CD4-positive, alpha-beta T cell (primary cell): ENCODE measurements at regions of chr1 and their contacts with region 1.

Region 1: DNA sequence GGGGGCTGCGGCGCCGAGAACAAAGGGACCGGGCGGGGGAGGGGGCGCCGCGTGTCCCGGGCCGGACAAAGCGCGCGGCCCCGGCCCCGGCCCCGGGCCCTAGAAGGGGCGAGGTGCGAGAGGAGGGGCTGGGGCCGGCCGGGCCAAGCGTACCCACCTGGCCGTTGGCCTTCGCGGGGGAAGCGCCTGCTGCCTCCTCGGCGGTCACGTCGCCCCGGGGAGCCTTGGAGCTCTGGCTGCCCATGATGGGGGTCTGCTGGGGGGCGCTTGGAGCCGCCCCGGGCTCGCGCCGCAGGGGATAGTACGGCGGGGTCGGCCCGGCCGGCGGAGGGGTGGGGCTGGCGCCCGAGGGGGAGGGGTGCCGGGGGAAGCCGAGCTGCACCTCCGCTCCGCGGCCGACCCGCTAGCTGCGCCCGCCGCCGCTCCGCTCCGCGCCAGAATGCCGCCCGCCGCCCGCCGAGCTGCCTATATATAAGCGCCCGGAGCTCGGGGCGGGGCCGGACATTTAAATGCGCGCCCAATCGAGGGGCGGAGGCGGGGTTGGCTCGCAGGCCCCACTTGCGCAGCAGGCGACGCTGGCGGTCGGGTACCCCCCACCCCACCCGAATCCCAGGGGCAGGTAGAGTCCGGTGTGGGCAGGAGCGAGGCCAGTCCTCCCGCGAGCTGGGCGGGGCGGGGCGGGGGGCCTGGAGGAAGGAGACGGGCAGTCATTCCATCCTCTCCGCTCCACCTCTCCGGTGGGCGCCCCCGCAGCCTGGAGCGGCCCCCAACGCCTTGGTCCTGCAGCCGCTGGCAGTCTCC is at the start of gene MARCKSL1:
- DNase-seq: peak; percentile 79 to 94 (median 86)
- ATAC-seq: peak; percentile 66
- H3K4me3 ChIP-seq: peak within 1 kb of the TSS; percentile 59
- H3K4me3 Mint-ChIP-seq: peak within 1 kb of the TSS; percentile 94
- H3K27ac ChIP-seq: peak within 1 kb of the TSS in 1 of 2 donors; percentile 52
- H3K27ac Mint-ChIP-seq: peak within 1 kb of the TSS; percentile 87
- H3K4me1 ChIP-seq: peaks cover 49% of the 10 kb centered on the region
- H3K4me1 Mint-ChIP-seq: peaks cover 50% of the 10 kb centered on the region
- H3K27me3 ChIP-seq: no peaks in the 10 kb centered on the region
- H3K27me3 Mint-ChIP-seq: no peaks in the 10 kb centered on the region
- CTCF ChIP-seq: no peak
- total RNA-seq, gene MARCKSL1: 23.4 to 23.6 TPM

Region 2: GRCh38 chr1:32205401-32206370 is 130.3 kb before region 1 on chr1 and contains the start of gene IQCC:
- CTCF ChIA-PET with region 1: no interaction called
- POLR2A ChIA-PET with region 1: interaction called, 23 read pairs
- intact Hi-C with region 1: no loop called
- DNase-seq: peak; percentile 72 to 95 (median 81)
- ATAC-seq: peak; percentile 59
- H3K4me3 ChIP-seq: peak within 1 kb of the TSS; percentile 90
- H3K4me3 Mint-ChIP-seq: peak within 1 kb of the TSS; percentile 91
- H3K27ac ChIP-seq: peak within 1 kb of the TSS; percentile 33 to 49
- H3K27ac Mint-ChIP-seq: peak within 1 kb of the TSS; percentile 87
- H3K4me1 ChIP-seq: peaks cover 55% of the 10 kb centered on the region
- H3K4me1 Mint-ChIP-seq: peaks cover 38% of the 10 kb centered on the region
- H3K27me3 ChIP-seq: no peaks in the 10 kb centered on the region
- H3K27me3 Mint-ChIP-seq: no peaks in the 10 kb centered on the region
- CTCF ChIP-seq: no peak
- total RNA-seq, gene IQCC: 2.4 to 3.2 TPM

Region 3: DNA sequence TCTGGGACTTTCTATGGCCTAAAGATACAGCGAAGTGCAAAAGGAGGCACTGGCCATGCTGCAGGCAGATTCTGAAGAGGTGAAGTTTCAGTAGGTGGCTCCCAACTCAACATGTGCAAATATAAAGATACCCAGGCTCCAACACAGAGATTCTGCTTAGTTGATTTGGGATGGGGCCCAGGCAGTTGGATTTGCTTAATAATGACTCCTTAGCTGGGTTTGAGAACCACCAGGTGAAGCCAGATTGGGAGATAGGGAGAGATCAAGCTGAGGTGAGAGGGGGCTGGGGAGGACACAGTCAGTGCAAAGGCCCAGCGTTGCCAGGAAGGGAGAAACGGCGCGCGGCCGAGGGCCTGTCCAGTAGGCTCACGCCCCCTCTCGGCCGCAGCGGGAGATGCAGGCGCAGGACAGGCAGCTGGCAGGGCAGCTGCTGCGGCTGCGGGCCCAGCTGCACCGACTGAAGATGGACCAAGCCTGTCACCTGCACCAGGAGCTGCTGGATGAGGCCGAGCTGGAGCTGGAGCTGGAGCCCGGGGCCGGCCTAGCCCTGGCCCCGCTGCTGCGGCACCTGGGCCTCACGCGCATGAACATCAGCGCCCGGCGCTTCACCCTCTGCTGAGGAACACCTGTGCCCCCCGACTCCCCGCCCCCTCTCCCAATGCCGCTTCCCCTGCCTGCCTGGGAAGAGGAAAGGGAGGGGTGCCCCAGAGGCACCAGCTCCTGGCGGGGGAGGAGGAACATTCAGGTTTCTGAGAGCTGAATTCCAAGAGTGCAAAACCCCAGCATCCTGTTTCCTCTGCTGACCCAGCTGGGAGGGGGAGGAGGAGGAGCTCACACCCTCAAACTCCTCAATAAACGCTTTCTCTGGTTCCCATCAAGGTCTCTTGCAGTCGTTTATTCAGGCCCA is 87.8 kb before region 1 on chr1:
- CTCF ChIA-PET with region 1: interaction called, 9 read pairs
- POLR2A ChIA-PET with region 1: interaction called, 64 read pairs
- intact Hi-C with region 1: loop called in 1 of 2 experiments (anchors 5 kb)
- DNase-seq: peak; percentile 56 to 86 (median 66)
- ATAC-seq: no peak
- H3K4me3 ChIP-seq: peak overlapping the region; percentile 41
- H3K4me3 Mint-ChIP-seq: peak overlapping the region; percentile 86
- H3K27ac ChIP-seq: peak overlapping the region; percentile 87 to 94
- H3K27ac Mint-ChIP-seq: peak overlapping the region; percentile 99
- H3K4me1 ChIP-seq: peaks cover 65% of the 10 kb centered on the region
- H3K4me1 Mint-ChIP-seq: peaks cover 58% of the 10 kb centered on the region
- H3K27me3 ChIP-seq: no peaks in the 10 kb centered on the region
- H3K27me3 Mint-ChIP-seq: no peaks in the 10 kb centered on the region
- CTCF ChIP-seq: peak; percentile 92

Region 4: GRCh38 chr1:32273388-32274208 is 62.4 kb before region 1 on chr1:
- CTCF ChIA-PET with region 1: no interaction called
- POLR2A ChIA-PET with region 1: interaction called, 10 read pairs
- intact Hi-C with region 1: no loop called
- DNase-seq: peak; percentile 51 to 92 (median 84)
- ATAC-seq: peak; percentile 89
- H3K4me3 ChIP-seq: peak overlapping the region; percentile 44
- H3K4me3 Mint-ChIP-seq: peak overlapping the region; percentile 87
- H3K27ac ChIP-seq: peak overlapping the region; percentile 60 to 78
- H3K27ac Mint-ChIP-seq: peak overlapping the region; percentile 93
- H3K4me1 ChIP-seq: peaks cover 76% of the 10 kb centered on the region
- H3K4me1 Mint-ChIP-seq: peaks cover 56% of the 10 kb centered on the region
- H3K27me3 ChIP-seq: no peaks in the 10 kb centered on the region
- H3K27me3 Mint-ChIP-seq: no peaks in the 10 kb centered on the region
- CTCF ChIP-seq: no peak

Region 5: GRCh38 chr1:32351399-32352238 is 15.6 kb after region 1 on chr1:
- CTCF ChIA-PET with region 1: interaction called, 9 read pairs
- POLR2A ChIA-PET with region 1: interaction called, 72 read pairs
- intact Hi-C with region 1: loop called in 1 of 2 experiments (anchors 1 kb)
- DNase-seq: peak; percentile 84 to 97 (median 90)
- ATAC-seq: peak; percentile 95
- H3K4me3 ChIP-seq: peak overlapping the region; percentile 66
- H3K4me3 Mint-ChIP-seq: peak overlapping the region; percentile 87
- H3K27ac ChIP-seq: peak overlapping the region; percentile 53 to 78
- H3K27ac Mint-ChIP-seq: peak overlapping the region; percentile 76
- H3K4me1 ChIP-seq: peaks cover 48% of the 10 kb centered on the region
- H3K4me1 Mint-ChIP-seq: peaks cover 51% of the 10 kb centered on the region
- H3K27me3 ChIP-seq: no peaks in the 10 kb centered on the region
- H3K27me3 Mint-ChIP-seq: no peaks in the 10 kb centered on the region
- CTCF ChIP-seq: no peak

Region 6: GRCh38 chr1:32386676-32387392 is 50.8 kb after region 1 on chr1:
- CTCF ChIA-PET with region 1: no interaction called
- POLR2A ChIA-PET with region 1: interaction called, 12 read pairs
- intact Hi-C with region 1: no loop called
- DNase-seq: no peak
- ATAC-seq: peak; percentile 81
- H3K4me3 ChIP-seq: no peak overlapping the region
- H3K4me3 Mint-ChIP-seq: no peak overlapping the region
- H3K27ac ChIP-seq: peak overlapping the region in 1 of 2 donors; percentile 5
- H3K27ac Mint-ChIP-seq: no peak overlapping the region
- H3K4me1 ChIP-seq: peaks cover 15% of the 10 kb centered on the region
- H3K4me1 Mint-ChIP-seq: peaks cover 12% of the 10 kb centered on the region
- H3K27me3 ChIP-seq: no peaks in the 10 kb centered on the region
- H3K27me3 Mint-ChIP-seq: no peaks in the 10 kb centered on the region
- CTCF ChIP-seq: no peak